H1 (cell line): ENCODE measurements at regions of chr12 and their contacts with region 1.

Region 1: GRCh38 chr12:99043319-99043914 is 398.3 kb downstream of the APAF1 start:
- DNase-seq: peak; percentile 47 to 73
- H3K4me3 ChIP-seq: no peak overlapping the region
- H3K27ac ChIP-seq: no peak overlapping the region
- H3K4me1 ChIP-seq: no peaks in the 10 kb centered on the region
- H3K27me3 ChIP-seq: no peaks in the 10 kb centered on the region
- CTCF ChIP-seq: peak; percentile 64 to 85 (median 82)
- EP300 ChIP-seq: no peak
- POLR2A ChIP-seq: no peak
- RAD21 ChIP-seq: peak; percentile 99

Region 2: DNA sequence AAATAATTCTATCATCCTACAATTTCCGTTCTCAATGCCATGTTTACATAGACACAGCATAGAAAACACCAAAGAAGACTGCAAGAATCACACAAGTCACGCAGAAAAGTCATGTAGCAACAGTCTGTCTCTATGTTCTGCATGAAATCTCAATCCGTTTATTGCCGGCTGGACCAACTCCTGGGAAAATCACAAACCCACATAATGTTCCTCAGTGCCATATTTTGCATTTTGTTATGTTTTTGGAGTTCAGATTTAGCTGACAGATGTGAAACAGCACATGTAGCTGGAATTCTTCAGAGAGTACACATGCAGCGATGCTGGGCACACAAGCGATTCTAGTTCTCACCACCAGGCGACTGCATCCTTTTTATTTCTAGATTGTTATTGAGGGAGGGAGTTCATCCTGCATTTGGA is 205.2 kb before region 1 on chr12:
- CTCF ChIA-PET with region 1: no interaction called
- POLR2A ChIA-PET with region 1: no interaction called
- DNase-seq: no peak
- H3K4me3 ChIP-seq: no peak overlapping the region
- H3K27ac ChIP-seq: no peak overlapping the region
- H3K4me1 ChIP-seq: peaks cover 0 to 10% (median 5%) of the 10 kb centered on the region in 4 experiments; a peak in 5 of 7 replicates
- H3K27me3 ChIP-seq: no peaks in the 10 kb centered on the region
- CTCF ChIP-seq: peak; percentile 30 to 57 (median 36); a peak in 3 of 4 replicates
- EP300 ChIP-seq: no peak
- POLR2A ChIP-seq: no peak
- RAD21 ChIP-seq: peak; percentile 15 to 37; a peak in 1 of 4 replicates

Region 3: GRCh38 chr12:99053616-99054362 is 10.4 kb after region 1 on chr12:
- CTCF ChIA-PET with region 1: interaction called, 32 read pairs
- POLR2A ChIA-PET with region 1: no interaction called
- DNase-seq: no peak
- H3K4me3 ChIP-seq: no peak overlapping the region
- H3K27ac ChIP-seq: no peak overlapping the region
- H3K4me1 ChIP-seq: no peaks in the 10 kb centered on the region
- H3K27me3 ChIP-seq: peaks cover 0 to 3% (median 0%) of the 10 kb centered on the region in 4 experiments; a peak in 1 of 7 replicates
- CTCF ChIP-seq: no peak
- EP300 ChIP-seq: no peak
- POLR2A ChIP-seq: no peak
- RAD21 ChIP-seq: no peak

Region 4: DNA sequence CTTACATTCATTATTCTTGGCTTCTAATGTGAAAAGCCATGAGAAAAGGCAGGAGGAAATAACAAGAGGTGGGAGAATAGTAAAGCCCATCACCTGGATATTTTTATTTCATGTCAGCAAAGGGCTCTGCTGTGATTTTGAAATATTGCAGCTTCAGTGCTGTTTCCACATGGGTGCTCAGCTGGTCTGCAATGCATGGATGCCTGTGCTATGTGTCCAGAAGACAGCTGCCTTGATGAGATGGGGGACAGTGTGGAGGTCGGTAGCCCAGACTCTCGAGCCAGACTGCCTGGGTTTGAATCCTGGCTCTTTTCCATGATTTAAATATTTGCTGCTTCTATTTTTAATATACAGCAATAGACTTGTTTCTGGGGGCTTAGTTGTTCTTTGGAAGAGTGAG is 126.6 kb after region 1 on chr12:
- CTCF ChIA-PET with region 1: interaction called, 10 read pairs
- POLR2A ChIA-PET with region 1: no interaction called
- DNase-seq: no peak
- H3K4me3 ChIP-seq: no peak overlapping the region
- H3K27ac ChIP-seq: no peak overlapping the region
- H3K4me1 ChIP-seq: no peaks in the 10 kb centered on the region; a peak in 1 of 7 replicates
- H3K27me3 ChIP-seq: no peaks in the 10 kb centered on the region
- CTCF ChIP-seq: no peak
- EP300 ChIP-seq: no peak
- POLR2A ChIP-seq: no peak
- RAD21 ChIP-seq: no peak

Region 5: GRCh38 chr12:99287136-99287535 is 243.7 kb after region 1 on chr12:
- CTCF ChIA-PET with region 1: interaction called, 62 read pairs
- POLR2A ChIA-PET with region 1: no interaction called
- DNase-seq: no peak
- H3K4me3 ChIP-seq: no peak overlapping the region
- H3K27ac ChIP-seq: no peak overlapping the region
- H3K4me1 ChIP-seq: no peaks in the 10 kb centered on the region
- H3K27me3 ChIP-seq: no peaks in the 10 kb centered on the region
- CTCF ChIP-seq: peak in 2 of 3 experiments; percentile 22 to 32; a peak in 2 of 4 replicates
- EP300 ChIP-seq: no peak
- POLR2A ChIP-seq: no peak
- RAD21 ChIP-seq: peak; percentile 68 to 76

Region 6: DNA sequence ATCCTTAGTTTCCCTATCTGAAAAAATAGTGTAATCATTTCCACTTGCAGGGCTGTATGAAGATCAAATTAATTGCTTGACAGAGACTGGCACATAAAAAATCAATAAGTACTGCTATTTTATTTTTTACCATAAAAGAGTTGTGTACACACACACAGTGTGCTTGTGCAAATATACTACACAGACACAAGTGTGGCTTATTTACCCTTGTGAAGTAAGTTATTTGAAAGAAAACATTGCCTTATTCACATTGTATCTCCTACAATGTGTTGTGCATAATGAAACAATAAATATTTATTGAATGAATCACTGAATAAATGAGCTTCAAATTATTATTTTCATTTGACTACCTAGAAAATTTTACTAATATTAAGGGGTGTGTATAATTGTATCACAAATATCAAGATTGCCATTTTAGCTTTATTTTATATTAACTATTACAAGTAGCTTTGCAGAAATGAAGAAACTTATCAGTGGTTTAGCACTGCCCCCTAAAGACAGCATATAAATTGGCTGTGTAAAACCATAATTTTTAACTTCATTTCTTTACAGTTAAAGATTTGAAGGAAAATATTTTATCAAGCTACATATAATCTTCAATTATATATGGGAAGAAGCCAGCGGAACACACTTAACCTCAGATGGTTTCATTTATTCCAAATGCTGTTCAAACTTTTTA is 615.4 kb after region 1 on chr12:
- CTCF ChIA-PET with region 1: interaction called, 22 read pairs
- POLR2A ChIA-PET with region 1: no interaction called
- DNase-seq: no peak
- H3K4me3 ChIP-seq: no peak overlapping the region
- H3K27ac ChIP-seq: no peak overlapping the region
- H3K4me1 ChIP-seq: no peaks in the 10 kb centered on the region
- H3K27me3 ChIP-seq: no peaks in the 10 kb centered on the region
- CTCF ChIP-seq: peak in 1 of 3 experiments; percentile 16; a peak in 2 of 4 replicates
- EP300 ChIP-seq: no peak
- POLR2A ChIP-seq: no peak
- RAD21 ChIP-seq: peak in 1 of 2 experiments; percentile 49; a peak in 3 of 4 replicates